ENCODE measurements at regions of chr3 and their contacts with region 1.

Region 1: DNA sequence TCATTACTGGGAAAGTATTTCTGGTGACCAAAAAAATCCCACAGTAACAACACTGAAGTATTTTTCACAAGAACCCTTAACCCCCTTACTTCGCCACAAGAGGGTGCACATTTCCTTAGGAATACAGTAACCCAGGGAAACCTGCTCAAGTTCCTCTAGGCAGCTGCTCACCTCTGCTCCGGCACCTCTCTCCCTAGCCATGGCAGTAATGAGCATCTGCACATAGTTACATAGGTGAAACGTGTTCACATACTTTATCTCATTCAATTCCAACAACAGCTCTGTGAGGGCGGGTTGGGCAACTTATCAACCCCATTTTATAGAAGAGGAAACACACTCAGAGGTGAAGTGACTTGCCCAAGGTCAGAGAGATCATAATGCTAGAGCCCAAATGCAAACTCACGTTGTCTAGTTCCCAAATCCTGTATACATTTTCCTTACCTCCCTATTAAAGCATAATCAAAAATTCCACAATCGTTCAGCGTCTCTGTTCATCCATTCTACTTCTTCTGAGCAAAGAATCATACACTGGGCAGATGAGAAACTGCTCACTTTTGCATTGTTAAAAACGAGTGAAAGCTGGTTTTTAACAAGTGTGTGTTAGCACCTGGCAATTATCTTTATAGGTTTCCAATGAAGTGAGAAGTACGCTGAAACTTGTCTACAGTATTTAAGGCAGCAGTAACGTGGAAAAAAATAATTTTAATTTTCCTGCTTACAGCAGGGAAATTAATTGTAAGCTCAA is 90.7 kb downstream of the IGF2BP2 start:
- DNase-seq: peak; percentile 93
- H3K4me3 Mint-ChIP-seq: no peak overlapping the region
- H3K27ac Mint-ChIP-seq: peak overlapping the region; percentile 68
- H3K4me1 Mint-ChIP-seq: peaks cover 51% of the 10 kb centered on the region
- H3K27me3 Mint-ChIP-seq: no peaks in the 10 kb centered on the region
- CTCF ChIP-seq: peak; percentile 58

Region 2: DNA sequence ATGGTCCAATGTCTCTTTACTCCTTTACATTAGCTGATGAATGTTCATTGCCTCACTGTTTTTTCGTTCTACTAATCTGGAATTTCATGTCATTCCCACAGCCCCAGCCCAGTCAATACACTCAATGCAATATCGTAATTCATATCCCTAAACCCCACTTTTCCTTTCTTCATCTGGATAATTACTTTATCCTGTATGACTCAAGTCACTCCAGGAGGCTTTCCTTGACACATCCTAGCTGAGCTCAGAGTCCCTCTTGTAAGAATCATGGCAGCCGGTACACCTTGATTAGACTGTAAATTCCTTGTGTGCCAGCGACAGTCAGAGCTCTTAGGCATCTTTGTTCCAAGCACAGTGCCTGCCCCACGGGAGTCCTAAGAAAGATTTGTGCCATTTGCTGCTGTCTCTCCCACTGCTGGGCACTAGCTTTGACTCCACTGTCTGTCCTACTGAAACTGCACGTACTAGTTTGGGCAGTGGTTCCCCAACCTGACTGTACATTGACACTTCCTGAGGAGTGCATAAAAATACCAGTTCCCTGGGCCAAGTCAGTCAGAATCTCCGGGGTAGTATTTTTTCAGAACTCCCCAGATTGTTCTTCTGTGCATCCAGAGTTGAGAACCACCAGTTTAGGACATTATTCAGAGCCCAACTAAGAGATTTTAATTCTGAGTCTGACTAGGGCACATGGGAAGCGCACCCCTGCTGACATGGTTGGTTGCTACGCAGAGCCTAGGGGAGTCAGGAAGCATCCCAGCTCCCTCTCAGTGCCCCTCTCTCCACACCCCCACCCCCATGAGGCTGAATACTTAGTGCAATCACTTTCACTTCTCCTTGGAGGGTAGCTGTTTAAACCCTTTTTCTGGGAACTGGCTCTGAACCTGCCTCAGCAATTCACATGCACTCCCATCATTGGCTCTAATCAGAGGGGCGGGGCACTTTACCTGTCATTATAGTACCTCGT is 561.8 kb before region 1 on chr3:
- CTCF ChIA-PET with region 1: no interaction called
- POLR2A ChIA-PET with region 1: no interaction called
- intact Hi-C with region 1: no loop called
- DNase-seq: no peak
- H3K4me3 Mint-ChIP-seq: no peak overlapping the region
- H3K27ac Mint-ChIP-seq: no peak overlapping the region
- H3K4me1 Mint-ChIP-seq: no peaks in the 10 kb centered on the region
- H3K27me3 Mint-ChIP-seq: no peaks in the 10 kb centered on the region
- CTCF ChIP-seq: no peak

Region 3: DNA sequence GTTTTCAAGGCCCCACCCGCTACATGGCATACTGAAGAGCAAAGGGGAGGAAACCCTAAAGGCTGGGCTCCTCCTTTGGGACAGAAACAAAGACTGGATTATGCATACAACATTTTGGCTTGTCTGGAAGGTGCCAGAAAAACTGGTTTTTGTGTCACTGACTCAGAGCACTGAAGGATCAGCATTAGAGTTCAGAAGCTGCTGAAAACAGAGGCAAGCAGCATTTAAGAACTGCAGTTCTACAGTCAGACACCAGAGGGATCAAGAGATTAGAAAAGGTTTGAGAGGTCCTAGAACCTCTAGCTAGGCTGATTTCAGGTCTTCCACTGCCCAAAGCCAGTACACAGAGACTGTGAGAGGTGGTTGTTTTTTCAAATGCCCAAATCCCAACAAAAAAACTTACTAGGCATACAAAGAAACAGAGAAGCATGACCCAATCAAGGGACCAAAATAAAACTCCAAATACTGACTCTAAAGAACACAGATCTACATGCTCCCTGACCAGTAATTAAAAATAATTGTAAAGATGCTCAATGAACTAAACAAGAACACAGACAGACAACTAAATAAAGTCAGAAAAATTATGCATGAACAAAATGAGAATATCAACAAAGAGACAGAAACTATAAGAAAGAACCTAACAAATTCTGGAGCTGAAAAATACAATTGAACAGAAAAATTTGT is 56.9 kb before region 1 on chr3:
- CTCF ChIA-PET with region 1: interaction called, 25 read pairs
- POLR2A ChIA-PET with region 1: interaction called, 16 read pairs
- intact Hi-C with region 1: loop called (anchors 2 kb)
- DNase-seq: peak; percentile 79
- H3K4me3 Mint-ChIP-seq: no peak overlapping the region
- H3K27ac Mint-ChIP-seq: peak overlapping the region; percentile 63
- H3K4me1 Mint-ChIP-seq: peaks cover 8% of the 10 kb centered on the region
- H3K27me3 Mint-ChIP-seq: no peaks in the 10 kb centered on the region
- CTCF ChIP-seq: peak; percentile 70

Region 4: GRCh38 chr3:185717121-185717520 is 17.0 kb before region 1 on chr3:
- CTCF ChIA-PET with region 1: interaction called, 9 read pairs
- POLR2A ChIA-PET with region 1: interaction called, 105 read pairs
- intact Hi-C with region 1: no loop called
- DNase-seq: peak; percentile 74
- H3K4me3 Mint-ChIP-seq: peak overlapping the region; percentile 40
- H3K27ac Mint-ChIP-seq: peak overlapping the region; percentile 96
- H3K4me1 Mint-ChIP-seq: peaks cover 55% of the 10 kb centered on the region
- H3K27me3 Mint-ChIP-seq: no peaks in the 10 kb centered on the region
- CTCF ChIP-seq: no peak

Region 5: GRCh38 chr3:185764163-185764979 is 30.2 kb after region 1 on chr3:
- CTCF ChIA-PET with region 1: interaction called, 72 read pairs
- POLR2A ChIA-PET with region 1: interaction called, 16 read pairs
- intact Hi-C with region 1: loop called (anchors 2 kb)
- DNase-seq: no peak
- H3K4me3 Mint-ChIP-seq: no peak overlapping the region
- H3K27ac Mint-ChIP-seq: peak overlapping the region; percentile 35
- H3K4me1 Mint-ChIP-seq: peaks cover 44% of the 10 kb centered on the region
- H3K27me3 Mint-ChIP-seq: no peaks in the 10 kb centered on the region
- CTCF ChIP-seq: no peak

Region 6: GRCh38 chr3:185937689-185938463 is 203.7 kb after region 1 on chr3 and contains the start of gene TRA2B:
- CTCF ChIA-PET with region 1: interaction called, 6 read pairs
- POLR2A ChIA-PET with region 1: interaction called, 36 read pairs
- intact Hi-C with region 1: loop called (anchors 1 kb)
- DNase-seq: peak; percentile 99
- H3K4me3 Mint-ChIP-seq: peak within 1 kb of the TSS; percentile 98
- H3K27ac Mint-ChIP-seq: peak within 1 kb of the TSS; percentile 100
- H3K4me1 Mint-ChIP-seq: peaks cover 17% of the 10 kb centered on the region
- H3K27me3 Mint-ChIP-seq: no peaks in the 10 kb centered on the region
- CTCF ChIP-seq: no peak
- total RNA-seq, gene TRA2B: 212 and 246 TPM in 2 replicates

Region 7: GRCh38 chr3:185950718-185951117 is 216.6 kb after region 1 on chr3:
- CTCF ChIA-PET with region 1: no interaction called
- POLR2A ChIA-PET with region 1: no interaction called
- intact Hi-C with region 1: no loop called
- DNase-seq: no peak
- H3K4me3 Mint-ChIP-seq: no peak overlapping the region
- H3K27ac Mint-ChIP-seq: no peak overlapping the region
- H3K4me1 Mint-ChIP-seq: peaks cover 5% of the 10 kb centered on the region
- H3K27me3 Mint-ChIP-seq: peaks cover 11% of the 10 kb centered on the region
- CTCF ChIP-seq: no peak

Measured in MCF 10A (cell line).